ENCODE measurements at regions of chr17 and their contacts with region 1.

Region 1: GRCh38 chr17:56833809-56834379 is at the starts of genes C17orf67 and DGKE:
- DNase-seq: peak; percentile 99
- total RNA-seq, gene C17orf67: 0.83 TPM
- total RNA-seq, gene DGKE: 2.2 TPM

Region 2: DNA sequence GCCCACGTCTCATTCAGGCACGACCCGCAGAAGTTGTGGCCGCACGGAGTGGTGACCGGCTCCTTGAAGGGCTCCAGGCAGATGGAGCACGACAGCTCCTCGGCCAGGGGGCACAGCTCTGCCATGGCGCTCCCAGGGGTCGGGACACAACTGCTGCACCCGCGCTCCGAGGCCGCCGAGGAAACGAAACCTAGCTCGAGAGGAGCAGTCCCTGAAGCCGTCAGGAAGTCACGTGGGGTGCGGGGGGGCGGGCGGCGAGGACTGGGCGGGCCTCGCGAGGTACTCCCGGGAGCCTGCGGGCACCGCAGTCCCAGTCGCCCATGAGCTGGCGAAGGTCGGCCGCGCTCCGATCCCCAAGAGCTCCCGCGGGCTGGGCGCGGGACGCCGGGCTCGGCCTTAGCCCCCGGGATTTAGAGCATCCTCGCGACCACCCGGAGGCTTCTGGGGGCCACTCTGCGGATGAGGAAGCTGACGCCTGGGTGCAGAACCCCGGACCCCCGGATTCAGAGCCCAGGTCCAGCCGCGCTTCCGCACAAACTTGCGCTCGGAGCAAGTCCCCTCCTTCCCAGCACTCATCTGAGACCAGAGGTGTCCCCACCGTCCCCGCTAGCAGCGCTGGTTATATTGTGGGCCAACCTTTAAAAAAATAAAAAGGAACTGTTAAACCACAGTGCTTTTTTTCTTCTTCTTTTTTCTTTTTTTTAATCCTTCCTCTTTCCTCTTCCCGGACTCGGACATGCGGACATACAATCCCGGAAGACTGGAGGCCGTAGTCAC is 80.2 kb after region 1 on chr17 and contains the start of gene TRIM25:
- intact Hi-C with region 1: loop called (anchors 2 kb)
- DNase-seq: peak; percentile 97
- total RNA-seq, gene TRIM25: 15.2 TPM

Measured in cardiac septum (tissue), 1 donor.